ENCODE measurements at regions of chr3 and their contacts with region 1.

Region 1: GRCh38 chr3:174125267-174125824 is 727.8 kb downstream of the NLGN1 start:
- ATAC-seq: peak in 5 of 8 experiments; percentile 45 to 83 (median 74)
- H3K4me3 ChIP-seq: no peak overlapping the region
- H3K27ac ChIP-seq: no peak overlapping the region
- H3K4me1 ChIP-seq: peaks cover 7 to 14% of the 10 kb centered on the region in 2 donors

Region 2: DNA sequence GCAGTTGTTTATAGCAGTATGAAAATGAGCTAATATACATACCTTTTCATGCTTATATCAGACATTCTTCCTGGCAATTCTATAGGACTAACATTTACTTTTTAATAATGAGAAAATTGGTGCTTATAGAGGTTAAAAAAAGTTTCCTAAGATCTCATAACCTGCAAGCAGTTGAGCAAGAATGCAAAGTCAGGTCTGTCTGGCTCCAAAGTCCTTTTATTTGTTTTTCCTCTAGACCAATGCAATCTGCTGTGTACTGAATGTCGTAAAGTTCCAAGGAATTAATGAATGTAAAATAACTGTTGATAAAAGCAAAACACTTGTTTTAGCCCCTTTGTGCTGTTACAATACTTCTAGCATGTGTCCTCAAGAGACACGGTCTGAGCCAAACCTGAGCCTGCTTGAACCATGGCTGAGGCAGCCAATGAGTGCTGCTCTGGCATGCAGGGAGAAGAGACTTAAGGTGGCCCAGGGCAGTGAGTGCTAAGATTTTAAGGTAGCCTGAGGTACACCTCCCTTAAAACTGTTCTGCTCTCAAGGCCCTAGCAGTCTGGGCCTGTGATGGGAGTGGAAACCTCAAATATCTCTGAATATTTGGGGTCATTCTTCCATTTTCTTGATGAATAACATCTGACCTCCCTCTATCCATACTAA is 178.7 kb after region 1 on chr3:
- in situ Hi-C with region 1: loop called in 1 of 9 experiments (anchors 25 kb)
- ATAC-seq: peak in 3 of 8 experiments; percentile 36 to 86 (median 44)
- H3K4me3 ChIP-seq: no peak overlapping the region
- H3K27ac ChIP-seq: no peak overlapping the region
- H3K4me1 ChIP-seq: no peaks in the 10 kb centered on the region

Measured in motor neuron (in vitro differentiated cells).